Esophagus squamous epithelium (tissue), 5 donors: ENCODE measurements at regions of chr18 and their contacts with region 1.

Region 1: DNA sequence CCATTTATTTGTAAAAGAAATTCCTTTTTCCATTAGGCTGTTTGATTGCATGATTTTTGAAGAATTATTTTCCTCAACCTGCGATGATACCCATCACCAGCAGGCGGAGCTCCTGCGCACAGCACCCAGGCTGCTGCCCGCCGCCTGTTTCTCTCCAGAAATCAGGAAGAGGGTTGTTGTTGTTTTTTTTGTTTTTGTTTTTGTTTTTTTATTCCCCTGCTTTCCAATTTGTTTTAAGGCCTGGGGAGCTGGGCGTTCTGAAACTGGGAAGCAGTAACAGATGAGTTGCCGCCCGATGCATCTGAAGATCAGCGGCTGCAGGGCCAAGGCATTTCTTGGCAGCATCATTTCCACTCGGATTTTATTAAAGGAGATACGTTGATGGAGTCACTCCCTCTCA is 132.1 kb downstream of the MBP start:
- DNase-seq: no peak
- H3K4me3 ChIP-seq: peak overlapping the region in 2 of 4 donors; percentile 14 to 47
- H3K27ac ChIP-seq: peak overlapping the region in 1 of 4 donors; percentile 28
- H3K4me1 ChIP-seq: peaks cover 0 to 15% (median 0%) of the 10 kb centered on the region in 3 donors
- H3K27me3 ChIP-seq: no peaks in the 10 kb centered on the region
- CTCF ChIP-seq: peak; percentile 90 to 98 (median 94)
- POLR2A ChIP-seq: no peak

Region 2: DNA sequence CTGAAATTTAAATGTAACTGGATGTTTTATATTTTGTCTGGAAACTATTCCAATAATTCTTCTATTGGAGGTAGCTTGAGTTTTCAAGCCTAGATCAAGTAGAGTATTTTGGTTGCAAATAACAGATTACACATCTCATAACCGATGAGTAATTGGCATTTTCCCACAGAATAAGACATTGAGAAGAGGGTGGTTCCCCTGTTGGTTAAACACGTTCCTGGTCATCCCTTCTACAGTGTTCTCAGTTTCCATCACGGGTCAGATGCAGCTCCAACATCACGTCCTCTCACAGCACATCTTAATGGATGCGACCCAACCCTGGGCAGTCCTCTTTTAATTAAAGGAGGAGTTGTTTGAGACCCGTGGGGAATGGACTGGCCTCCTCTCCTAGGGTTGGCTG is 356.5 kb before region 1 on chr18:
- intact Hi-C with region 1: no loop called
- DNase-seq: no peak
- H3K4me3 ChIP-seq: no peak overlapping the region
- H3K27ac ChIP-seq: no peak overlapping the region
- H3K4me1 ChIP-seq: no peaks in the 10 kb centered on the region
- H3K27me3 ChIP-seq: no peaks in the 10 kb centered on the region
- CTCF ChIP-seq: no peak
- POLR2A ChIP-seq: no peak

Region 3: DNA sequence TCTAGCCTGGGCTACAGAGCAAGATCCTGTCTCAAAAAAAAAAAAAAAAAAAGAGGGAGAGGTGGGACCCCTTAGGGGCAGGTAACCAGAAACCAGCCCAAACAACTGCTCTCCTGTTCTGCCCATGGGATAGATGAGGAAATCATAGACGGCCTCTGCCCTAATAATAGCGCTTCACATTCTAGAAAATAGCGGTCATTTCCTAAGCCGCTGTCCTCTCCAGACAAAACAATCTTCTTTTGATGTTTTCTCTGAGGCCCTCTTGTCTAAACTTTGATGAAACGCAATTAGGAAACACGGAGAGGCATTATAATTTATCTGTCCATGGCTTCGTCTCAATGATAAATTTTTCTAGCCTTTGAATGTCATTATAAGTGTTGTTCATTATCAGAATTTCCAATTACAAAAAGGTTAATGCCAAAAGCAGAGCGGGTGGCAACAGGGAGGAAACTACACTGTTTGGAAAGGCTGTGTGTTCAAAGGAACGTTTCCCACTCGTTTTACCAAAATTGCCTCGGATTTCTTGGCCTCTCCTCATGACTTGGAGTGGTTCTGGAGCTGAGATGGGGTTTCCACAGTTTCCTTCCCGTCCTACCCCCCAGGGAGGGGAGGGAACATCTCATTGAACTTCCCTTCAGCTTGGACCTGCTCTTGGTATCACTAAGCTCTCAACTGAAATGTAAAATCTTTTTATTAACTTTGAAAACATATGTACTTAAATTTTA is 329.8 kb before region 1 on chr18:
- intact Hi-C with region 1: no loop called
- DNase-seq: no peak
- H3K4me3 ChIP-seq: no peak overlapping the region
- H3K27ac ChIP-seq: peak overlapping the region in 1 of 4 donors; percentile 26
- H3K4me1 ChIP-seq: no peaks in the 10 kb centered on the region
- H3K27me3 ChIP-seq: peaks cover 0 to 2% (median 0%) of the 10 kb centered on the region in 4 donors
- CTCF ChIP-seq: no peak
- POLR2A ChIP-seq: no peak

Region 4: GRCh38 chr18:76894561-76895346 is 105.8 kb before region 1 on chr18:
- intact Hi-C with region 1: no loop called
- DNase-seq: no peak
- H3K4me3 ChIP-seq: no peak overlapping the region
- H3K27ac ChIP-seq: no peak overlapping the region
- H3K4me1 ChIP-seq: no peaks in the 10 kb centered on the region
- H3K27me3 ChIP-seq: no peaks in the 10 kb centered on the region
- CTCF ChIP-seq: no peak
- POLR2A ChIP-seq: no peak

Region 5: DNA sequence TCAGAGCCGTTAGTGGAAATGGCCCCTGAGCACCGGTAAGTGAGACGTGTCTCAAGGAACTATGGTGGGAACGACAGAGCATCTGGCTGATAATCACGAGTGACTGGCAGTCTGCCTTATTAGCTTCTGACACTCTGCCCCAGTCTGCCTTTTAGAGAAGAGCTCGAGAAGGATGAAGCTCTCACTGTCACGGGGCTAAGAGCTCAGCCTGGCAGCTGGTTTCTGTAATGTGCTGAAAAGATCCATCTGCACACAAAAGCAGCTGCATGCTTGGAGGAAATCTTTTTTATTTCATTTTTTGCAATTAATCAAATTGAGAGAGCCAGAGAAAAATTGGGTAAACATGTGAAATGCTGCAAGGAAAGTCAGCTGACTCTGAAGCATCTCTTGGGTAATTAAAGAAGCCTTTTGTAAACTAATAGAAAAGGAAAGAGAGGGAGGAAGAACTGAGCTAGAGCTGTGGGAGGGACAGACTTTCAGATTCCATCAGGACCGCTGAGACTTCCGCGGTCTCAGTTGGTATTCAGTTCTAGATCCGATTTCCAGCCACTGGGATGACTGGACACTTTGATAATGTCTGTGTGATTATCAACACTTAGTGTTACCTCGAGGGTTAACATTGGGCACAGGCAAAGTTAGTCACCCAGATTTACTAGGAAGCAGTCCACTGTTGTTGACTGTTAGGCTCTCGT is 107.6 kb after region 1 on chr18:
- intact Hi-C with region 1: no loop called
- DNase-seq: no peak
- H3K4me3 ChIP-seq: peak overlapping the region in 1 of 4 donors; percentile 23
- H3K27ac ChIP-seq: peak overlapping the region; percentile 41 to 79 (median 72)
- H3K4me1 ChIP-seq: peaks cover 17 to 90% (median 34%) of the 10 kb centered on the region in 3 donors
- H3K27me3 ChIP-seq: no peaks in the 10 kb centered on the region
- CTCF ChIP-seq: no peak
- POLR2A ChIP-seq: peak in 1 of 4 donors; percentile 4

Region 6: DNA sequence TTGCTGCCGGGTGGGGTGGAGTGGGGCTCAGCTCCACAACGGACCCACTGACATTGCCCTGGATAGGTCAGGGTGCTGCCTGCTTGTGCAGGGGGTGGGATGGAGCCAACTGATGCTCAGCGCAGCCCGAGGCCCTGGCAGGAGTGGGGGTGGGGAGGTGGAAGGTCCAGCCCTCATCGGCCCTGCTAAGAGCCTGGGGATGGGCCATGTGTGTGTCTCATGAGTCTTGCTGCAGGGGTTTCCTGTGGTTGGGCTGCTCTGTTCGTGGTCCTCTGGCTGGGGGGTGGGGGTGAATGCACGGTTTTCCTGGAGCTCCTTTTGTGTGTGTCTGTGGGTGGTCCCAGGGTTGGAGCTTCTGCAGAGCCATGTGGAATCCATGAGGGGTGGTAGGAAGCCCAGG is 209.7 kb after region 1 on chr18:
- intact Hi-C with region 1: loop called (anchors 5 kb)
- DNase-seq: no peak
- H3K4me3 ChIP-seq: no peak overlapping the region
- H3K27ac ChIP-seq: no peak overlapping the region
- H3K4me1 ChIP-seq: peaks cover 6 to 38% (median 14%) of the 10 kb centered on the region in 3 donors
- H3K27me3 ChIP-seq: no peaks in the 10 kb centered on the region
- CTCF ChIP-seq: no peak
- POLR2A ChIP-seq: no peak